Activated CD8-positive, alpha-beta T cell treated with anti-CD3 and anti-CD28 coated beads for 36 hours (primary cell): ENCODE measurements at regions of chr9 and their contacts with region 1.

Region 1: DNA sequence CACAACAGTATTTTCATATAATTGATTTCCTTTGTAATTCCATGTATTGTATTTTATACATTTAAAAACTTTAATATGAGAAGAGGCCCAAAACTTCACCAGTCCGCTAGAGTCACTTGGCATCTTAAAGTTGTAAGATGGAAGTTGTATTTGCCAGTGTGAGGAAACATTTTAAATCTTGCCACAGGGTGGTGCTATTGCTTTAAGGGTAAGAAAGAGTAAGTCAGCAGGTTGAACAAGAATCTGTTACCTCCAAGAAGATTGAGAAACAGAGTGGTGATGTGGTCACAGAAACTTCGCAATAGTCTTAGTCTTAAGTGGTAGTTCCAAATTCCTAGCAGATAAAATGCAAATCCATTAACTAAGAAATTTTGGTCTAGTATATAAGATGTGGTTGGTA is 39.8 kb upstream of the RANBP6 start:
- DNase-seq: peak; percentile 58
- ATAC-seq: peak; percentile 67
- H3K4me3 Mint-ChIP-seq: no peak overlapping the region
- H3K27ac Mint-ChIP-seq: no peak overlapping the region
- H3K4me1 Mint-ChIP-seq: peaks cover 3% of the 10 kb centered on the region
- H3K27me3 Mint-ChIP-seq: peaks cover 2% of the 10 kb centered on the region
- CTCF ChIP-seq: peak; percentile 60

Region 2: DNA sequence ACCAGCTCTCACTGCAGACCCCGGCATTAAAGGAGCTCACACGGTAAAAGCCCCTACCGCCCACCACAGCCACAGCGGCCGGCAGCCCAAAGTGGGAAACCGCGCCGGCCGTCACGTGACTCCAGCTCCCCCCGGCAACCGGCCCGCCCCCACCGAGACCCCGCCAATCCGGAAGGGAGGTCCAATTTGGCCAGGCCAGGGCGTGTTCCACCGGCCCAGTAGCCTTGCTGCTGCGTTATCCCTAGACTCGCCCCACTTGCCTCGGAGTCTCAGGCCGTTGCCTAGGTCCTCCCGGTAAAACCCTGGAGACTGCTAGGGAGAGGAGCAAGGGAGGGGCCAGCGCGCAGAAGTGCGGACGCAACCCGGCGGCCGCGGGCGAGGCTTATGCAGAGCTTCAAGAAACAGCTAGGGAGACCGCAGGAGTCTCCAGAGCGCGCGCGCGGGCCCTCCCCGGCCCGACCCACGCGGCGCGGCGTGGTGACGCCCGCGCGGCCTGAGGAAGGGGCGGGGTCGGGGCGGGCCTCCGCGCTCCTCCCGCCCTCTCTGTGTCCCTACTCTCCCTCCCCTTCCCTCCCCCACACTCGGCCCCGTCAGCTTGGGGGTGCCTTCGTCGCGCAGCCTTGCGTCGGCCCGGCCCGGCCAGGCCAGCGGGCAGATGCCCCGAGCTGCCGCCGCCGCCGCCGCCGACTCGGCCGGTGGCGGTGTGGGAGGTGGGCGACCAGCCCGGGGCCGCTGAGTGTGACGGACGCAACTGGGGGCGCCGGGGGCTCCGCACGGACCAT is 426.5 kb before region 1 on chr9 and contains the start of gene RIC1:
- CTCF ChIA-PET with region 1: no interaction called
- POLR2A ChIA-PET with region 1: no interaction called
- intact Hi-C with region 1: no loop called
- DNase-seq: peak; percentile 94
- ATAC-seq: peak; percentile 83
- H3K4me3 Mint-ChIP-seq: peak within 1 kb of the TSS; percentile 100
- H3K27ac Mint-ChIP-seq: peak within 1 kb of the TSS; percentile 100
- H3K4me1 Mint-ChIP-seq: peaks cover 54% of the 10 kb centered on the region
- H3K27me3 Mint-ChIP-seq: no peaks in the 10 kb centered on the region
- CTCF ChIP-seq: no peak
- total RNA-seq, gene RIC1: 14.4 to 14.6 TPM

Region 3: DNA sequence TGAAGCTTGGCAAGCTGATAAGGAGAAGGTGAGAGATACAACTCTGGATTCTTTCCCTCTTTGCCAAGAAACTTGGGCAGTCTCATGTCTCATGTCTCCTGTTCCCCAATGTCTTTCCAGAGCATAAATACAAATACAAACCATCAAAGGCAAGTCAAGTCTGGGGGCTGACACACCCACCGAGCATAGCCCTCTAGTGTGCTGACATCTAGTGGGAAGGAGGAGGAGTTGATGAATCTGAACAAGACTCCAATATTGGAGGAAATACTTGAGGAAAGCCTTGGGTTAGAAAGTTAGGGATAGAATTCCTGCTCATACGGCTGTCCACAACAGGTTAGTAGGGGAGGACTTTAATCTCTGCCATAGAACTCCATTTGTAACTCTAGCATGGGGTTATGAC is 155.9 kb before region 1 on chr9:
- CTCF ChIA-PET with region 1: interaction called, 16 read pairs
- POLR2A ChIA-PET with region 1: no interaction called
- intact Hi-C with region 1: no loop called
- DNase-seq: no peak
- ATAC-seq: peak; percentile 30
- H3K4me3 Mint-ChIP-seq: no peak overlapping the region
- H3K27ac Mint-ChIP-seq: no peak overlapping the region
- H3K4me1 Mint-ChIP-seq: no peaks in the 10 kb centered on the region
- H3K27me3 Mint-ChIP-seq: no peaks in the 10 kb centered on the region
- CTCF ChIP-seq: peak; percentile 18

Region 4: DNA sequence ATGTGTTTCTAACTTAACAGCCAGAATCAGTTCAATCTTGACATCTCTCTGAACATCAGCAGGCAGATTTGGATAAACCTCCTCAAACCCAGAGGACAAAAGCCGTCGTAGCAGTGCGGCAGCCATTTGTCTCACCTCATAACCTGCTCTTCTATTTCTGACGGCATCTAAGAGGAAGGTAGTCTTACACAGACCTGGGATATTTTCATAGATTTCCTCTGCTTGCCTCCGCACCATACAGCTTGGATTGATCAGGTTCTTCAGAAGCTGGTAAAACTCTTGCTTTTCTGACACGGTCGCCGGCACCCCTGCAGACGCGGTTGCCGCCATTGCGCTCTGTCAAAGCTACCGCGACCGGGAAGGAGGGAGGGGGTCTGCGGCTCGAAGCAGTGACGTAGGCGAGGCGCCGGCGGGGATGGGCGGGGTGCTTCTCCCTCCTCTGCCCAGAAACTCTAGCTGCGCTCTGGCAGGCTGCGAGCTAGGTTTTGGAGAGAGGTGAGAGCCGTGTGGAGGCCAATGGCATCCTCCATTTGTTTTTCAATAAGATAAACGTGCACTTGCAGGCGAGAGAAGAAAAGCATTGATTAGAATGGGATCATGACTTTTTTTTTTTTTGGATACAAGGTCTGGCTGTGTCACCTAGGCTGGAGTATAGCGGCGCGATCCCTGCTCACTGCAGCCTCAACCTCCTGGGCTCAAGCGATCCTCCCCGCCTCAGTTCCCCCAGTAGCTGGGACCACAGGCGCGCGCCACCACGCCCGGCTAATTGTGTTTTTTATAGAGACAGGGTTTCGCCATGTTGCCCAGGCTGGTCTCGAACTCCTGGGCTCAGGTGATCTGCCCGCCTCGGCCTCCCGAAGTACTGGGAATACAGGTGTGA is 39.7 kb before region 1 on chr9 and contains the start of gene RANBP6:
- CTCF ChIA-PET with region 1: interaction called, 14 read pairs
- POLR2A ChIA-PET with region 1: no interaction called
- intact Hi-C with region 1: no loop called
- DNase-seq: peak; percentile 95
- ATAC-seq: peak; percentile 97
- H3K4me3 Mint-ChIP-seq: peak within 1 kb of the TSS; percentile 95
- H3K27ac Mint-ChIP-seq: peak within 1 kb of the TSS; percentile 97
- H3K4me1 Mint-ChIP-seq: peaks cover 34% of the 10 kb centered on the region
- H3K27me3 Mint-ChIP-seq: no peaks in the 10 kb centered on the region
- CTCF ChIP-seq: no peak
- total RNA-seq, gene RANBP6: 16.2 to 17.1 TPM

Region 5: GRCh38 chr9:6068983-6069382 is 13.8 kb after region 1 on chr9:
- CTCF ChIA-PET with region 1: interaction called, 15 read pairs
- POLR2A ChIA-PET with region 1: no interaction called
- intact Hi-C with region 1: no loop called
- DNase-seq: peak; percentile 28
- ATAC-seq: peak; percentile 98
- H3K4me3 Mint-ChIP-seq: peak overlapping the region; percentile 45
- H3K27ac Mint-ChIP-seq: peak overlapping the region; percentile 86
- H3K4me1 Mint-ChIP-seq: peaks cover 9% of the 10 kb centered on the region
- H3K27me3 Mint-ChIP-seq: no peaks in the 10 kb centered on the region
- CTCF ChIP-seq: no peak

Region 6: DNA sequence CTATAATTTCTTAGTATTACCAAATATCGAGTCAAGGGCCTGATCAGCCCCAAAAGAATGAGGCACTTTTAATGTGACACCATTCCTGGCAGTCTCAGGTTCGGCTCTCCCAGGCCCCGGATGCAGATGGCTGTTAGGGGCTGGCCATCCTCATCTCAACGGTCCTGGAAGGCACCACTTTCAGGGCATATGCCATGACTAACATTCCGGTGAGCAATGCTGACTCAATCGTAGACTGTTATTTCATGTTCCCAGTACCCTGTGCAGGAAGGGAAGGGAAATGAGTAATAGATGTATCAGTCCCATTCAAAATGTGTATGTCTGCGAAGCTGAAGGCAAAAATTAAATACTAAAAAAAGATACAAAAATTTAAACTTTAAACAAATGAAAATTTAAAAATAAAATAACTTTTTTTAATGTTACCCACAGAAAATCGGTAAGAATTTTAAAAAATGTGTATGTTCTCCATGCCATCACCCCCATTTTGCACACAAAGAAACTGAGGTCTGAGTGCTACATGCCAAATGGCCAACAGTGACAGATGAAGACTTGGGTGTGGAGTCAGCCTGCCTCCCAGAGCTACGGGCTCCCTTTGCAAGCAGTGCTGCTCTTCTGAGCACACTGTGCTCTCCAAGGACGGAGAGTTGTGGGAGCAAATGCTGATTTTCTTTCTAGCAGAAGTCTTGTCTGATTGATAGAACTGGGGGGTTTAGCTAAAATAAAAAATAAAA is 511.4 kb after region 1 on chr9:
- CTCF ChIA-PET with region 1: interaction called, 10 read pairs
- POLR2A ChIA-PET with region 1: no interaction called
- intact Hi-C with region 1: loop called (anchors 10 kb)
- DNase-seq: peak; percentile 42
- ATAC-seq: peak; percentile 74
- H3K4me3 Mint-ChIP-seq: no peak overlapping the region
- H3K27ac Mint-ChIP-seq: peak overlapping the region; percentile 30
- H3K4me1 Mint-ChIP-seq: peaks cover 3% of the 10 kb centered on the region
- H3K27me3 Mint-ChIP-seq: peaks cover 2% of the 10 kb centered on the region
- CTCF ChIP-seq: no peak